Common myeloid progenitor, CD34-positive (primary cell): ENCODE measurements at regions of chr1 and their contacts with region 1.

Region 1: DNA sequence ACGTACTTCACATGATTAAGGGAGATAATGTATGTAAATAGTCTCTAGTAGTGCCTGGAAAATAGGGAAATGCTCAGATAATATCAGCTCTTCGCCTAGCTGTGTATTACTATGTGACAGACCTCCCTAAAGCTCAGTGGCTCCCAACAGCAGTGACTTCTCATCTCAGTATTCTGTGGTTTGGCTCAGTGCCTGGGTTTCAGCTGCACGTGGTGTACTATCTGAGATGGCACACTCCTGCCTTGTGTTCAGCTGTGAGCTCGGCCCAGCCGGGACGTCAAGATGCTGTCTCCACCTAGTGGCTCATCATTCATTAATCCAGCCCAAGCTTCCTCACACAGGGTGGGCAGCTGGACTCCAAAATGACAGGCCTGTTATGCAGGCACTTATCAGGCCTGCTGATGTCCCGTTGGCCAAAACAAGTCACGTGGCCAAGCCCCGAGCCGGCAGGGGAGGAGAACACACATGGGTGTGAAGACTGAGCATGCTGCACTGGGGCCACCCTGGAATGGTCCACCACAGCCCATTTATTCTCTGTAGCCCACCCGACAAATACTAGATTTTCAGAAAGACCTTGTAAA is 17.8 kb downstream of the SLFNL1 start:
- DNase-seq: peak; percentile 98 to 99 (median 99)
- H3K4me3 ChIP-seq: no peak overlapping the region
- H3K27ac ChIP-seq: no peak overlapping the region
- H3K4me1 ChIP-seq: peaks cover 0 to 20% (median 15%) of the 10 kb centered on the region in 4 experiments
- H3K27me3 ChIP-seq: no peaks in the 10 kb centered on the region

Region 2: GRCh38 chr1:40979233-40980067 is 24.3 kb before region 1 on chr1 and contains the start of gene CTPS1:
- CTCF ChIA-PET with region 1: interaction called, 13 read pairs
- POLR2A ChIA-PET with region 1: no interaction called
- DNase-seq: peak; percentile 92 to 95 (median 95)
- H3K4me3 ChIP-seq: peak within 1 kb of the TSS; percentile 41 to 87 (median 75)
- H3K27ac ChIP-seq: peak within 1 kb of the TSS; percentile 46 to 76
- H3K4me1 ChIP-seq: peaks cover 0 to 30% (median 16%) of the 10 kb centered on the region in 4 experiments
- H3K27me3 ChIP-seq: no peaks in the 10 kb centered on the region

Region 3: GRCh38 chr1:40986956-40987355 is 16.8 kb before region 1 on chr1:
- CTCF ChIA-PET with region 1: interaction called, 13 read pairs
- POLR2A ChIA-PET with region 1: no interaction called
- DNase-seq: no peak
- H3K4me3 ChIP-seq: no peak overlapping the region
- H3K27ac ChIP-seq: no peak overlapping the region
- H3K4me1 ChIP-seq: peaks cover 0 to 2% (median 0%) of the 10 kb centered on the region in 4 experiments
- H3K27me3 ChIP-seq: no peaks in the 10 kb centered on the region

Region 4: DNA sequence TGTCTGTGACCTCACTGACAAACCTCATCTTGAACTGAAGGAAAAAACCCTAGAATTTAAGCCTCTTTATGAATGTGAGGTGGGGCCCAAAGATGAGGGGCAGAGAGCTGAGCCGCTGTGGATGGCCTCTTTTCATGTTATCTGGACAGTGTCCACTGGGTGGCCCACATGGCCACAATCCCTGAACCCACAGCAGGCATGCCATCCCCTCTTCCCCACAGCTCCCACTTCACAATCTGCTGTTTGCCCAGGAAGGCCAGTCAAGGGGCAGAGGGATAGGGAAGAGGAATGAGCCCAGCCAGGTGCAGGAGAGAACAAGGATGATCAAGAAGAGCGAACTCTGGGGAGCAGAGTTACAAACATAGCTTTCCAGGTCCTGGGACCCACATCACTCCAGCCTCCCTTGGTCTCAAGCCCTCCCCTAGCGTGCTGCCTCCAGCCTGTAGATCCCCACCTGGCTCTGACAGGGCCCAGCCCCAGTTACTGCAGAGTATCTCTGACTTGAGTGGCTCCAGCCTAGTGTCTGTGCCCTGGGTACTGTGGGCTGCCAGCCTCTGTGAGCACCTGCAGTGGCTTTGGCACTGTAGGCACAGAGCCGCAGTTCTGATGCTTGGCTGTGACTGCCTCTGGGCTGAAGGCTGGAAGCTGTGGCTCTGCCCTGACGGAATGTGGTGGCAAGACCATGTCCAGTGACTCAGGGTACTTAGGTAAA is 19.7 kb after region 1 on chr1:
- CTCF ChIA-PET with region 1: interaction called, 10 read pairs
- POLR2A ChIA-PET with region 1: no interaction called
- DNase-seq: no peak
- H3K4me3 ChIP-seq: no peak overlapping the region
- H3K27ac ChIP-seq: no peak overlapping the region
- H3K4me1 ChIP-seq: peaks cover 0 to 5% (median 0%) of the 10 kb centered on the region in 4 experiments
- H3K27me3 ChIP-seq: no peaks in the 10 kb centered on the region